HepG2 (cell line): ENCODE measurements at regions of chr6 and their contacts with region 1.

Region 1: GRCh38 chr6:31971993-31972708 is at the start of gene DXO:
- DNase-seq: peak; percentile 98
- ATAC-seq: peak; percentile 86
- H3K4me3 ChIP-seq: peak within 1 kb of the TSS; percentile 73 to 94 (median 90)
- H3K27ac ChIP-seq: peak within 1 kb of the TSS; percentile 86
- H3K4me1 ChIP-seq: peaks cover 32% of the 10 kb centered on the region
- H3K27me3 ChIP-seq: no peaks in the 10 kb centered on the region; a peak in 1 of 5 replicates
- CTCF ChIP-seq: peak; percentile 17; the same call in 1 of the 2 replicates
- EP300 ChIP-seq: peak in 1 of 2 experiments; percentile 58; a peak in 1 of 4 replicates
- POLR2A ChIP-seq: peak; percentile 52 to 60; a peak in 3 of 4 replicates
- RAD21 ChIP-seq: peak; percentile 58
- total RNA-seq, gene DXO: 10.8 and 18.6 TPM in 2 replicates

Region 2: GRCh38 chr6:31901953-31902643 is 70.1 kb before region 1 on chr6 and contains the start of gene ZBTB12:
- CTCF ChIA-PET with region 1: no interaction called
- POLR2A ChIA-PET with region 1: interaction called, 11 read pairs
- in situ Hi-C with region 1: no loop called
- intact Hi-C with region 1: no loop called
- DNase-seq: peak; percentile 96
- ATAC-seq: peak; percentile 76
- H3K4me3 ChIP-seq: peak within 1 kb of the TSS; percentile 65 to 78 (median 67)
- H3K27ac ChIP-seq: peak within 1 kb of the TSS; percentile 60
- H3K4me1 ChIP-seq: peaks cover 51% of the 10 kb centered on the region
- H3K27me3 ChIP-seq: peaks cover 1 to 13% of the 10 kb centered on the region in 2 experiments; a peak in 2 of 5 replicates
- CTCF ChIP-seq: peak; percentile 48
- EP300 ChIP-seq: peak in 1 of 2 experiments; percentile 30; a peak in 1 of 4 replicates
- POLR2A ChIP-seq: peak; percentile 58 to 78; a peak in 3 of 4 replicates
- RAD21 ChIP-seq: peak; percentile 88
- total RNA-seq, gene ZBTB12: 6.0 and 6.8 TPM in 2 replicates

Region 3: DNA sequence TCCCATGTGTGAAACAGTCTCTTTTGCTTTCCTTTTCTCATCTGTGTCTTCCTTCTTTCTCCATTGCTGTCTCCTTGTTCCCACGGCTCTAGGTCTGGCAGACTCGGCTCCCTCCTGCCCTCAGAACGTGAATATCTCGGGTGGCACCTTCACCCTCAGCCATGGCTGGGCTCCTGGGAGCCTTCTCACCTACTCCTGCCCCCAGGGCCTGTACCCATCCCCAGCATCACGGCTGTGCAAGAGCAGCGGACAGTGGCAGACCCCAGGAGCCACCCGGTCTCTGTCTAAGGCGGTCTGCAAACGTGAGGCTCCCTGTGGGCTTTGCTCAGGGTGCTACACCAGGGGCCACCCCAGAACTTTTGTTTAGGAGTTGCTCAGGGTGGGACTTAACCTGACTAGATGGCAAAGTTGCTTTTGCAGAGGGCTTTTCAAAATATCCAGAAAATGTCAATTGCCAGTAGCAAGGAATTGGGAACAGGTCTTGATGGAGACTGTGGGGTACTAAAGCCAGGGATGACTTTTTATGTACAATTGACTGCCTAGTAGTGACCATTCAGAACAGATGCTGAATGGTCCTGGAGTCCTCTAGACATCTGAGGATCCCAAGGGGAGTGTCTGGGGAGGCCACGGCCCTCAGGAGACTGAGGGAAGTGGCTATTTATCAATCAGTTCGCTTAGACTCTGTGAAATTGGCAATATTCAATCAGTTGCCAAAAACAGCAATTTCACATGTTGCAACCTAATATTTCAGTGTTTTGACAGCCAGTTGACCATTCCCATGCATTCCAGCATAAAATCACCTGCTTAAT is 44.1 kb before region 1 on chr6:
- CTCF ChIA-PET with region 1: no interaction called
- POLR2A ChIA-PET with region 1: interaction called, 11 read pairs
- in situ Hi-C with region 1: no loop called
- intact Hi-C with region 1: no loop called
- DNase-seq: no peak
- ATAC-seq: peak; percentile 67
- H3K4me3 ChIP-seq: peak overlapping the region; percentile 69 to 81 (median 72)
- H3K27ac ChIP-seq: peak overlapping the region; percentile 88
- H3K4me1 ChIP-seq: peaks cover 69% of the 10 kb centered on the region
- H3K27me3 ChIP-seq: no peaks in the 10 kb centered on the region; a peak in 1 of 5 replicates
- CTCF ChIP-seq: no peak
- EP300 ChIP-seq: no peak
- POLR2A ChIP-seq: no peak
- RAD21 ChIP-seq: no peak

Region 4: DNA sequence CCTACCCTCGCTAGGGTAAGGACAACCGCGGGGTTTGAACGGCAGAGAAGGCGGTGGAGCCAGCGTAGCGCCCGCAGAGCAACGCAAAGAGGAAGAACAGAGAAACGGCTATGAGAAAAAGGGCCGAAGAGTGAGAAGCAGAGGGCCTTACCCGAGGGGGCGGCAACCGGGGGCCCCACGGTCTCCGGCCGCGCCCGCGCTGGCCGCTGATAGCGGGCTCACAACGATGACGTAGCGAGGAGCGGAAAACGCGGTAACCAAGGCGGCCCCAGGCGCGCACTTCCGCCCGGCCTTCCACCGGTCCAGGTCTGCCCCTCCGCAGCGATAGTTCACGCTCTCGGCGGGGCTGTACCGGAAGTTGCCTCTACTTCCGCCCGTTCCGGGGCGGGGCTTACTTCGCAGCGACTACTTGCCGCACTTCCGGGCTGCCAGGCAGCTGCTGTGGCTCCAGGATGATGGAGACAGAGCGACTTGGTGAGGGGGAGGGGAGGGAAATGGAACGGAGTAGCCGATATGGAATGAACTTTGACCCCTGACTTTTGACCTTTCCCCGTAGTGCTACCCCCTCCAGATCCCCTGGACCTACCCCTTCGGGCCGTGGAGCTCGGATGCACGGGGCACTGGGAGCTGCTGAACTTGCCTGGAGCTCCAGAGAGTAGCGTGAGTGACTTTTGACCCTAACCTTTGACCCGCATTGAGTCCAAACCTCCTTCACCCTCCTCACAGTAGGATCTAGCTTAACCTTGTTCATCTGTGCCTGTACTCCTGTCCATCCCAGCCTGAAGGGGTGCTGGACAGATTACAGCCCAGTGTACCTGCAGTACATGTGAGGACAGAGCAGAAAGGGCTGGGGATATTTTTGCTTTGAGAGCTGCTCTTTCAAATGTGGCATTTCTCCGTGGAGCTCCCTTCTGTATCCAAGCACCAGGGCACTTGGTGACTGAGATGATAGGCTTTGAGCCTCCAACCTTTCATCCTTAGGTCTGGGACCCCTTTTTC is 13.1 kb before region 1 on chr6 and contains the starts of genes NELFE and SKIC2:
- CTCF ChIA-PET with region 1: no interaction called
- POLR2A ChIA-PET with region 1: interaction called, 142 read pairs
- in situ Hi-C with region 1: no loop called
- intact Hi-C with region 1: no loop called
- DNase-seq: peak; percentile 97
- ATAC-seq: peak; percentile 97
- H3K4me3 ChIP-seq: peak within 1 kb of the TSS; percentile 81 to 98 (median 95)
- H3K27ac ChIP-seq: peak within 1 kb of the TSS; percentile 75
- H3K4me1 ChIP-seq: peaks cover 31% of the 10 kb centered on the region
- H3K27me3 ChIP-seq: no peaks in the 10 kb centered on the region; a peak in 1 of 5 replicates
- CTCF ChIP-seq: no peak
- EP300 ChIP-seq: peak; percentile 23 to 56; a peak in 2 of 4 replicates
- POLR2A ChIP-seq: peak; percentile 70 to 73
- RAD21 ChIP-seq: peak; percentile 64
- total RNA-seq, gene NELFE: 69.8 and 80.4 TPM in 2 replicates
- total RNA-seq, gene SKIC2: 59.7 and 67.1 TPM in 2 replicates